ENCODE measurements at regions of chr2 and their contacts with region 1.

Region 1: DNA sequence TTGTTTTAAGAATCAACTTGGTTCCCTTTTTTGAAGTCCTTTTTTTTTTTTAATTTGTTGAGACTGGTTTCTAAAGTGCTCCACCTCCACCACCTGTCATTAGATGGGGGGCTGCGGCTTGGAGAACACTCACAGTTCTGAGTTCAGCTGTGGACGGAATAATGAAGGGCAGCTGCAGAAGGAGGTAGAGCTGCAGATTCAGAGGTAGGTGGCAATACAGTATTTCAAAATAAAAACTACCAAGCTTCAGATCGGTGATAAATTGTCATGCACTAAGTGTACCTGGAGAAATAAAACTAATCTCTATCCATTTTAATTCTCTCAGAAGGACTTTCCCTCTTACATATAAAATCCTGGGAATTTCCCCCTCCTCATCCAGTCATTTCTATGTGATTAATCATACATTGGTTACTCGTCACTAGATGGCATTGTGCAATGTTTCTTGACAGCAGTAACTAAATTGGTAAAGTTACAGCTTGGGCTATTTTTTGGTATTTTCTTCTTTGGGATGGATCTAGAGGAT is 81.1 kb upstream of the SLC39A10 start:
- DNase-seq: peak; percentile 59
- H3K4me3 ChIP-seq: no peak overlapping the region
- H3K27ac ChIP-seq: no peak overlapping the region
- H3K4me1 ChIP-seq: no peaks in the 10 kb centered on the region
- H3K27me3 ChIP-seq: no peaks in the 10 kb centered on the region
- CTCF ChIP-seq: peak in 1 of 2 donors; percentile 1
- POLR2A ChIP-seq: no peak

Region 2: GRCh38 chr2:195533771-195534642 is 41.9 kb before region 1 on chr2:
- CTCF ChIA-PET with region 1: no interaction called
- POLR2A ChIA-PET with region 1: no interaction called
- dilution Hi-C with region 1: no loop called
- intact Hi-C with region 1: no loop called
- DNase-seq: no peak
- H3K4me3 ChIP-seq: no peak overlapping the region
- H3K27ac ChIP-seq: no peak overlapping the region
- H3K4me1 ChIP-seq: no peaks in the 10 kb centered on the region
- H3K27me3 ChIP-seq: peaks cover 0 to 7% of the 10 kb centered on the region in 2 experiments
- CTCF ChIP-seq: no peak
- POLR2A ChIP-seq: no peak

Region 3: DNA sequence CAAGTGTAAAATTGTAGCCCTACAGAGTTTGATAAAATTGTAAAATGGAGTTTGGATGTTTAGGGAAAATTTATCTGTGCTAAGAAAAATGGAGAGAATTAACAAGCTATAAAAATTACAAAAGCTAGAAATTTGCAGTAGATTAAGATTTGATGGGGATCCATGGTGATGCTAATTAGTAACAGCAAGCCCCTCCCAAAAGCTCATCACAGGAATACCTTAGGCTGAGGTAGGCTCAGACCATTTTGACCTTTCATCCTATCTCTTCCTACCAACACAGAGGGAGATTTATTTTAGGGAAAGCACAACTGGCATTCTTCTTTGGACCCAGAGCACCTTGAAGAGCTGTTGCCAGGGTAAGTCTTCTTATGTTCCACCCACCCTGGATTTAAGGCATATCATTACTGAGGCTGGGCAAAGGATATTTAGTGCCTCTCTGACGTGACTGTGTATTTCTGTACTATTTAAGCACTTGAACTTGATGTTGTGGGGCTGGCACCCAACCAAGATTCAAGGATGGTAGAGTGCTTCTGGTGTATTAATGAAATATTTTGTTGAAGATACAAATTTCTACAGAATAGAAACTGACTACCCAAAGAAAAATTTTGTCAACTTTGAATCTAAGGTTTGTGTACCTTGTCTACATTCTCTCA is 10.2 kb after region 1 on chr2:
- CTCF ChIA-PET with region 1: interaction called, 17 read pairs
- POLR2A ChIA-PET with region 1: no interaction called
- dilution Hi-C with region 1: no loop called
- intact Hi-C with region 1: no loop called
- DNase-seq: no peak
- H3K4me3 ChIP-seq: no peak overlapping the region
- H3K27ac ChIP-seq: no peak overlapping the region
- H3K4me1 ChIP-seq: no peaks in the 10 kb centered on the region
- H3K27me3 ChIP-seq: no peaks in the 10 kb centered on the region
- CTCF ChIP-seq: no peak
- POLR2A ChIP-seq: no peak

Region 4: GRCh38 chr2:195709901-195710806 is 134.2 kb after region 1 on chr2:
- CTCF ChIA-PET with region 1: no interaction called
- POLR2A ChIA-PET with region 1: no interaction called
- dilution Hi-C with region 1: no loop called
- intact Hi-C with region 1: no loop called
- DNase-seq: no peak
- H3K4me3 ChIP-seq: no peak overlapping the region
- H3K27ac ChIP-seq: no peak overlapping the region
- H3K4me1 ChIP-seq: no peaks in the 10 kb centered on the region
- H3K27me3 ChIP-seq: no peaks in the 10 kb centered on the region
- CTCF ChIP-seq: no peak
- POLR2A ChIP-seq: no peak